ENCODE measurements at regions of chr18 and their contacts with region 1.

Region 1: GRCh38 chr18:12744103-12744502 is 41.3 kb downstream of the PSMG2 start:
- DNase-seq: peak in 2 of 4 donors; percentile 25 to 53
- ATAC-seq: peak; percentile 79
- H3K4me3 ChIP-seq: no peak overlapping the region
- H3K27ac ChIP-seq: no peak overlapping the region
- H3K4me1 ChIP-seq: no peaks in the 10 kb centered on the region
- H3K27me3 ChIP-seq: no peaks in the 10 kb centered on the region
- CTCF ChIP-seq: peak; percentile 53 to 62

Region 2: DNA sequence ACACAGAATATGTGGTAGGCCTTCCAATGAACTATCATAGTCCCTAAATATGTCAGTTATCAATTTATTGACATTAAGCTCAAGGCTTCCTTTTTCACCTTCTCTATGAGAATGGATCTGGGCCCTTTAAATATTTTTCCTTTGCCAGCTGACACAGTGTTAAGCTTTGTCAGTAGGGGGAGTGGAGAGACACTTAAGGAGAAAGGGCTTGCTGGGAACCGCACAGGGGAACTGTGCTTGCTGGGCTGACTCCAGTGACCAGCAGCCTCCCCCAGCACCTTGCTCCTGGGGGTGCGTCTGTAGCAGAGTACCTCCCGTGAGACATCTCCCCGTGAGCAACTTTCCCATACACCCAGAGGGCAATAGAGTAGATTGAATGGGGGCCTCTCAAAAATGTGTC is 146.4 kb after region 1 on chr18:
- intact Hi-C with region 1: loop called in 1 of 2 experiments (anchors 10 kb)
- DNase-seq: no peak
- ATAC-seq: peak; percentile 45
- H3K4me3 ChIP-seq: no peak overlapping the region
- H3K27ac ChIP-seq: no peak overlapping the region
- H3K4me1 ChIP-seq: peaks cover 0 to 16% of the 10 kb centered on the region in 2 donors
- H3K27me3 ChIP-seq: peaks cover 0 to 2% of the 10 kb centered on the region in 2 donors
- CTCF ChIP-seq: no peak

Measured in left lung (tissue), 14 donors.